OCI-LY7 (cell line): ENCODE measurements at regions of chrX and their contacts with region 1.

Region 1: DNA sequence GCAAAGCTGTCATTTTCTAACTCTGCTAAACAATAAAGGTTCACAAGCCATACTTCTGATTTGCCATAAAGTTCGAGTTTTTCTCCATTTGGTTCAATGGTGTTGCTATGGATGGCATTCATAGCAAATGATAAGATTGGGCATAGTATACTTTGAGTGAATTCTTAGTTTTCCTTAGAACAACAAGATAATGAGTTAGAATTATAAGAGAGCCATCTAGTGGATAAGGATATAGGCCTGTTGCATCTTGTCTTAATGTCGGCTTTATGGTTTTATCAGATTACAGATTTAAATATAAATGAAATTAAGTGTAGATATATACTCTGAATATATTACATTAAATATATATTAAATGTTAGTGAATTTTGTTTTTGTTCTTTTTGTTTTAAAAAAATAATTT is 644.6 kb downstream of the IL1RAPL1 start:
- DNase-seq: no peak
- H3K4me3 ChIP-seq: no peak overlapping the region
- H3K27ac ChIP-seq: no peak overlapping the region
- H3K4me1 ChIP-seq: no peaks in the 10 kb centered on the region
- CTCF ChIP-seq: 0 out of 2 replicates have a peak, but pooled peaks have one; percentile 24

Region 2: GRCh38 chrX:28177202-28177601 is 1054.6 kb before region 1 on chrX:
- CTCF ChIA-PET with region 1: no interaction called
- POLR2A ChIA-PET with region 1: no interaction called
- intact Hi-C with region 1: loop called (anchors 10 kb)
- DNase-seq: peak; percentile 0
- H3K4me3 ChIP-seq: no peak overlapping the region
- H3K27ac ChIP-seq: no peak overlapping the region
- H3K4me1 ChIP-seq: no peaks in the 10 kb centered on the region
- CTCF ChIP-seq: peak; percentile 52

Region 3: GRCh38 chrX:28609917-28610613 is 621.7 kb before region 1 on chrX:
- CTCF ChIA-PET with region 1: no interaction called
- POLR2A ChIA-PET with region 1: no interaction called
- intact Hi-C with region 1: no loop called
- DNase-seq: no peak
- H3K4me3 ChIP-seq: no peak overlapping the region
- H3K27ac ChIP-seq: no peak overlapping the region
- H3K4me1 ChIP-seq: no peaks in the 10 kb centered on the region
- CTCF ChIP-seq: no peak

Region 4: GRCh38 chrX:29044423-29045184 is 187.2 kb before region 1 on chrX:
- CTCF ChIA-PET with region 1: no interaction called
- POLR2A ChIA-PET with region 1: no interaction called
- intact Hi-C with region 1: no loop called
- DNase-seq: no peak
- H3K4me3 ChIP-seq: no peak overlapping the region
- H3K27ac ChIP-seq: no peak overlapping the region
- H3K4me1 ChIP-seq: no peaks in the 10 kb centered on the region
- CTCF ChIP-seq: no peak

Region 5: GRCh38 chrX:30388325-30388724 is 1156.5 kb after region 1 on chrX:
- CTCF ChIA-PET with region 1: no interaction called
- POLR2A ChIA-PET with region 1: no interaction called
- intact Hi-C with region 1: no loop called
- DNase-seq: no peak
- H3K4me3 ChIP-seq: no peak overlapping the region
- H3K27ac ChIP-seq: no peak overlapping the region
- H3K4me1 ChIP-seq: no peaks in the 10 kb centered on the region
- CTCF ChIP-seq: no peak